ENCODE measurements at regions of chr6 and their contacts with region 1.

Region 1: DNA sequence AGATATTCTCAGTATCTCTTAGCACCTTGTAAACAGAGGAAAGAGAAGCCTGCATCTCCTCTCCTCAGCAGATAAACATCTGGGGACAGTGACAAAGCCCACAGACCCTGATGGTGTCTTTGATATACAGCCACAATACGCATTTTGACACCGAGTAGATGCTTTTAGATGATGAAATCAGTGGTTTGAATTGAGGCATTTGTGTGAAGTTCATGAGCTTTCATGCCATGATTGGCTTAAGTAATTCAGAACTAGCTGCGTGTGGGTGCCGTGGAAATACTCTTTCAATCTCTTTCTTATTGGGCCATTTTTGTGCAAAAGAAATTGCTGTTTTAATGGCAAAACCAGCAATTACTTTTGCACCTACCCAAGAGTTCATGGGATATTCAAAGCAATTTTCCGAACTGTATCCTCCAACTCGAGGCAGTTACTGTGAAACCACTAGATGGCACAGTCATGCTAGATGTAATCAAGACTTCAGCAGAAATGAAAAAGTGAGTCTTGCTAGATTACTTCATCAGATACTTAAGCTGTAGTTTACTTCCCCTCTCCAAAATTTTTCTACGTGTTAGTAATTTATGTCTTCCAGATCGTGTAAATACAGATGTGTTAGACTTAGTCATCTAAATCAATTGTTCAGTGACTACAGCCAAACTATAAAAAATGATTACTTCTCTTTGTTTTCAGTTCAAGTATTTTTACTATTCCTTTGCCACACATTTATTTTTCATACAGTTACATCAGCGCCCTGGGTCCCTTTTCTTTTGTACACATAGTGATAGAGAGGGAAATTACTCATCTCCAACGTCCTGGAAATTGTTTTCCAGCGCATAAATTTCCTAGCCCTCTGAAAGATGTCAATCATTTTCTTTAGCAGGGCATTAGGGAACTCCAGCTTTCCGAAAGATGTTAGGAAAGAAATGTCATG is 49.4 kb downstream of the IYD start:
- DNase-seq: peak; percentile 63
- ATAC-seq: peak; percentile 76
- H3K4me3 Mint-ChIP-seq: peak overlapping the region; percentile 68
- H3K27ac Mint-ChIP-seq: peak overlapping the region; percentile 77
- H3K4me1 Mint-ChIP-seq: peaks cover 29% of the 10 kb centered on the region
- H3K27me3 Mint-ChIP-seq: peaks cover 26% of the 10 kb centered on the region

Region 2: GRCh38 chr6:150491131-150491810 is 73.1 kb after region 1 on chr6:
- CTCF ChIA-PET with region 1: interaction called, 11 read pairs
- DNase-seq: peak; percentile 46
- ATAC-seq: peak; percentile 93
- H3K4me3 Mint-ChIP-seq: no peak overlapping the region
- H3K27ac Mint-ChIP-seq: peak overlapping the region; percentile 73
- H3K4me1 Mint-ChIP-seq: peaks cover 18% of the 10 kb centered on the region
- H3K27me3 Mint-ChIP-seq: peaks cover 2% of the 10 kb centered on the region

Region 3: DNA sequence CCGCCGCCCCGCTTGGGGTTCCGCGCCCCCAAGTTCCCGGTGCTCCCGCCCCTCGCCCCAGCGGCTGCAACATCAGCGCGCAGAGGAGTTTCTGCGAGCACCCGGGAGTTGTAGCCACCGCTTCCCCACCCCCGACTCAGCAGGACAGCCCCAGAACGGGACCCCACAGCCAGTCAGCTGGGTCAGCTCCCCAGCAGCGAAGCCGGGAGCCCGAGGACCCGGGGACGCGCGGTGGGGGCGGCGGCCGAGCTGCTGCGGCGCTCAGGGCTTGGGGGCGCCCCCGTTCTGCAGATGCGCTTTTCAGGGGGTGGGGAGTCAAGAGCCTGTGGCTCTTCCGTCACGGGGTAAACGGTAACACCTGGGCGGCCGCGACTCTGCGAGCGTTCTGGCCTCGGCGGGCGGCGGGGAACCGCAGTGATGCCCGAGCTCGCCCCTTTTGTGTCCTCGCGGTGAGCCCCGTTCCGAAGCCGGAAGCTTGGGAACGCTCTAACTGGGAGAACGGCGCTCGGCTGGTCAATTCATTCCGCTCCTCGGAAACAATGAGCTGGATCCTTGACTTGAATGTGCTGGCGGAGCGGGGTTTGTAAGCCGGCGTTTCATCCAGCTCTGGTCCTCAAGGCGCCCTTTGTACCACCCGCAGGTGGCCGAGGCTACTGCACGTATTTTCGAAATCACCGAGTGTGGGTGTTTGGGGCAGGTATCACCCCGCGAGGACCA is 182.3 kb after region 1 on chr6:
- CTCF ChIA-PET with region 1: interaction called, 22 read pairs
- DNase-seq: peak; percentile 81
- ATAC-seq: peak; percentile 77
- H3K4me3 Mint-ChIP-seq: peak overlapping the region; percentile 81
- H3K27ac Mint-ChIP-seq: peak overlapping the region; percentile 77
- H3K4me1 Mint-ChIP-seq: peaks cover 15% of the 10 kb centered on the region
- H3K27me3 Mint-ChIP-seq: peaks cover 58% of the 10 kb centered on the region

Region 4: GRCh38 chr6:150741633-150742504 is 323.7 kb after region 1 on chr6:
- CTCF ChIA-PET with region 1: interaction called, 10 read pairs
- DNase-seq: no peak
- ATAC-seq: no peak
- H3K4me3 Mint-ChIP-seq: no peak overlapping the region
- H3K27ac Mint-ChIP-seq: no peak overlapping the region
- H3K4me1 Mint-ChIP-seq: peaks cover 5% of the 10 kb centered on the region
- H3K27me3 Mint-ChIP-seq: peaks cover 2% of the 10 kb centered on the region

Measured in activated CD8-positive, alpha-beta memory T cell treated with anti-CD3 and anti-CD28 coated beads, Interleukin-2, amount 10 ng/mL, durations not matched to agents 7 days and 5 days (primary cell).